Activated CD4-positive, alpha-beta memory T cell treated with anti-CD3 and anti-CD28 coated beads for 36 hours (primary cell): ENCODE measurements at regions of chr1 and their contacts with region 1.

Region 1: GRCh38 chr1:117895482-117896114 is 33.8 kb downstream of the GDAP2 start:
- DNase-seq: peak; percentile 64
- H3K4me3 Mint-ChIP-seq: no peak overlapping the region
- H3K27ac Mint-ChIP-seq: no peak overlapping the region
- H3K4me1 Mint-ChIP-seq: peaks cover 4% of the 10 kb centered on the region
- H3K27me3 Mint-ChIP-seq: no peaks in the 10 kb centered on the region

Region 2: GRCh38 chr1:117146570-117147346 is 748.8 kb before region 1 on chr1:
- CTCF ChIA-PET with region 1: no interaction called
- POLR2A ChIA-PET with region 1: no interaction called
- intact Hi-C with region 1: no loop called
- DNase-seq: no peak
- H3K4me3 Mint-ChIP-seq: no peak overlapping the region
- H3K27ac Mint-ChIP-seq: no peak overlapping the region
- H3K4me1 Mint-ChIP-seq: no peaks in the 10 kb centered on the region
- H3K27me3 Mint-ChIP-seq: peaks cover 7% of the 10 kb centered on the region

Region 3: DNA sequence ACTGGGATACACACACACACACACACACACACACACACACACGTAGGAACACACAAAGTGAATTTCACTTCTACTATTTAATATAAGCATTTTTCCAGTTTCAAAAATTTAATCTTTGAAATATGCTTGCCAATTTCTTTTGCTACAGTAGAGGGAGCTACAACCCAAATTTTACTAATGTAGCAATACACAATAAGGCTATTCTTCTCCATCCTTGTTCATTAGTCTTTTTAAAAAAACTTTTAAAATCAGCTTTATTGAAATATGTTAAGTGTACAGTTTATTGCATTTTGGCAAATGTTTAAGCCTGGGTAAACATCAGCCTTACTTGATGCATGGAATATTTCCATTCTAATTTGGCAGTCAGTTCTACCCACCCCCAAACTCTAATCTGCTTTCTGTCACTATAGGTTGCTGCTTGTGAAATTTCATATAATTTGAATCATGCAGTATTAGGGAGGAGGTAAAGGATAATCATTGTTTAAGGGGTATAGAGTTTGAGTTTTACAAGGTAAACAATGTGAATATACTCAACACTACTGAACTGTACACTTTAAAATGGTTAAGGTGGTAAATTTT is 382.8 kb before region 1 on chr1:
- CTCF ChIA-PET with region 1: interaction called, 57 read pairs
- POLR2A ChIA-PET with region 1: no interaction called
- intact Hi-C with region 1: loop called (anchors 2 kb)
- DNase-seq: no peak
- H3K4me3 Mint-ChIP-seq: no peak overlapping the region
- H3K27ac Mint-ChIP-seq: no peak overlapping the region
- H3K4me1 Mint-ChIP-seq: no peaks in the 10 kb centered on the region
- H3K27me3 Mint-ChIP-seq: no peaks in the 10 kb centered on the region

Region 4: GRCh38 chr1:117883620-117884019 is 12.0 kb before region 1 on chr1:
- CTCF ChIA-PET with region 1: interaction called, 24 read pairs
- POLR2A ChIA-PET with region 1: no interaction called
- intact Hi-C with region 1: no loop called
- DNase-seq: no peak
- H3K4me3 Mint-ChIP-seq: no peak overlapping the region
- H3K27ac Mint-ChIP-seq: no peak overlapping the region
- H3K4me1 Mint-ChIP-seq: no peaks in the 10 kb centered on the region
- H3K27me3 Mint-ChIP-seq: no peaks in the 10 kb centered on the region

Region 5: GRCh38 chr1:117929173-117929989 is 33.8 kb after region 1 on chr1 and contains the starts of genes GDAP2 and WDR3:
- CTCF ChIA-PET with region 1: interaction called, 9 read pairs
- POLR2A ChIA-PET with region 1: no interaction called
- intact Hi-C with region 1: loop called (anchors 1 kb)
- DNase-seq: peak; percentile 98
- H3K4me3 Mint-ChIP-seq: peak within 1 kb of the TSS; percentile 96
- H3K27ac Mint-ChIP-seq: peak within 1 kb of the TSS; percentile 86
- H3K4me1 Mint-ChIP-seq: peaks cover 48% of the 10 kb centered on the region
- H3K27me3 Mint-ChIP-seq: no peaks in the 10 kb centered on the region
- total RNA-seq, gene GDAP2: 19.1 to 20.8 TPM
- total RNA-seq, gene WDR3: 48.3 to 51.8 TPM